Activated B cell treated with CpG ODN at 0.5 μM for 24 hours (primary cell): ENCODE measurements at regions of chr1 and their contacts with region 1.

Region 1: GRCh38 chr1:42766741-42767509 is at the starts of genes C1orf50 and P3H1:
- DNase-seq: peak; percentile 99
- ATAC-seq: peak; percentile 91
- H3K4me3 Mint-ChIP-seq: no peak within 1 kb of the TSS
- H3K27ac Mint-ChIP-seq: peak within 1 kb of the TSS; percentile 93
- H3K4me1 Mint-ChIP-seq: peaks cover 33% of the 10 kb centered on the region
- H3K27me3 Mint-ChIP-seq: no peaks in the 10 kb centered on the region
- CTCF ChIP-seq: no peak
- total RNA-seq, gene C1orf50: 10.6 and 13.1 TPM in 2 replicates
- total RNA-seq, gene P3H1: 27.1 and 30.4 TPM in 2 replicates

Region 2: GRCh38 chr1:42335050-42335808 is 431.7 kb before region 1 on chr1 and contains the start of gene FOXJ3:
- CTCF ChIA-PET with region 1: no interaction called
- POLR2A ChIA-PET with region 1: interaction called, 3 read pairs
- intact Hi-C with region 1: loop called (anchors 1 kb)
- DNase-seq: peak; percentile 91
- ATAC-seq: peak; percentile 92
- H3K4me3 Mint-ChIP-seq: peak within 1 kb of the TSS; percentile 93
- H3K27ac Mint-ChIP-seq: peak within 1 kb of the TSS; percentile 86
- H3K4me1 Mint-ChIP-seq: peaks cover 41% of the 10 kb centered on the region
- H3K27me3 Mint-ChIP-seq: no peaks in the 10 kb centered on the region
- CTCF ChIP-seq: no peak
- total RNA-seq, gene FOXJ3: 54.7 and 63.9 TPM in 2 replicates

Region 3: DNA sequence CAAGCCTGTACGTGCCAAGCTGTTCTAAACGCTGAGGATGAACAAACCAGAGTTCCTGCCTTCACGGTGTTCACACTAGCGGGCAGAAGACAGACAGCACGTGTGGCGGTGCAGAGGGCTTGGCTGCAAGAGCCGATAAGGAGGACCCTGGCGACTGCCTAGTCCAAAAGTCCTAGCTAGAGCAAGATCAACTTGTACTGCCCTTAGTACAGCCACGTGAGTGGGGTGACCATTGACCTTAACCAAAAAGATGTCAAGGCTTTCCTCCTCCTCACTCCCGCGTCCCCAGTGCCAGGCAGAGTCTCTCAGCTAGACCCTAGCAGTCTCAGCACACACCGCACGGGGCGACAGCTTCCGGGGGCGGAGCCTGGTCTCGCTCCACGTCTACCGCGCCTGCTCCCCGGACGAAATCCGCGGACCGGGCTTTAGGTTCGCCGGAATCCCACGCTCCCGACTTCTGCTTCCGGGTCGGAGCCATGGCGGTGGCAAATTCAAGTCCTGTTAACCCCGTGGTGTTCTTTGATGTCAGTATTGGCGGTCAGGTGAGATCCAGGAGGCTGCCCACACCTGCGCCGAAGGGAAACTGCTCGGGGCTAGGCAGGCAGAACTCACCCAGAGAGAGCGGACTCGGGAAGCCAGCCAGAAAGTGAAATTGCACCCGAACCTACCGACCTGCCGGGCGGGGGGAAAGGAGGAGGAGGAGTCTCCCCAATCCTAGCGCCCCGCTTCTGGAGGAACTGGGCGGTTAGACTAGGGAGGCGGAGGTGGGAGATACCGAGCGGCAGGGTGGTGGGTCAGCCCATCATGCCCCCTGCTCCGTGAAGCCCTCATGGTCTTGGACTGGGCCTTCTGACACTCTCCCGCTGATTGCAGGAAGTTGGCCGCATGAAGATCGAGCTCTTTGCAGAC is 108.7 kb before region 1 on chr1 and contains the start of gene PPIH:
- CTCF ChIA-PET with region 1: no interaction called
- POLR2A ChIA-PET with region 1: interaction called, 32 read pairs
- intact Hi-C with region 1: loop called (anchors 5 kb)
- DNase-seq: peak; percentile 87
- ATAC-seq: peak; percentile 99
- H3K4me3 Mint-ChIP-seq: peak within 1 kb of the TSS; percentile 95
- H3K27ac Mint-ChIP-seq: peak within 1 kb of the TSS; percentile 85
- H3K4me1 Mint-ChIP-seq: peaks cover 35% of the 10 kb centered on the region
- H3K27me3 Mint-ChIP-seq: no peaks in the 10 kb centered on the region
- CTCF ChIP-seq: no peak
- total RNA-seq, gene PPIH: 64.1 and 65.1 TPM in 2 replicates

Region 4: DNA sequence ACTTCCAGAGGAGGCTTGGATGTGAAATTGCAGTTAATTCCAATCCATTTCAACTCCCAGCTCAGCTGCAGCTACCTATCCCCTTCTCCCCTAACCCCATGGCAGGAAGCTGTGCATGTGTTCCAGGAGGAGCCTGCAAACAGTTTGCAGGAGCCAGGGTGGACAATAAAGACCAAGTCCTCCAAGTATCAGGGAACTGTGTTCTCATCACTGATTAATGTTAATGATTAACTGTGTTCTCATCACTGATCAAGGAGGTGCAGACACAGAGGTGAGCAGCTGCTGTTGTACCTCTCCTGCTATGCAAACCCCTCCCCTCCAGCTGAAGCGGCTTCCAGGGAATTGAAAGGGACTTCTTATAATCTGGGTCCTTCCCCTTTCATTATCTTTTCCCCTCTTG is 46.1 kb before region 1 on chr1:
- CTCF ChIA-PET with region 1: no interaction called
- POLR2A ChIA-PET with region 1: no interaction called
- intact Hi-C with region 1: no loop called
- DNase-seq: no peak
- ATAC-seq: no peak
- H3K4me3 Mint-ChIP-seq: no peak overlapping the region
- H3K27ac Mint-ChIP-seq: no peak overlapping the region
- H3K4me1 Mint-ChIP-seq: no peaks in the 10 kb centered on the region
- H3K27me3 Mint-ChIP-seq: no peaks in the 10 kb centered on the region
- CTCF ChIP-seq: no peak

Region 5: DNA sequence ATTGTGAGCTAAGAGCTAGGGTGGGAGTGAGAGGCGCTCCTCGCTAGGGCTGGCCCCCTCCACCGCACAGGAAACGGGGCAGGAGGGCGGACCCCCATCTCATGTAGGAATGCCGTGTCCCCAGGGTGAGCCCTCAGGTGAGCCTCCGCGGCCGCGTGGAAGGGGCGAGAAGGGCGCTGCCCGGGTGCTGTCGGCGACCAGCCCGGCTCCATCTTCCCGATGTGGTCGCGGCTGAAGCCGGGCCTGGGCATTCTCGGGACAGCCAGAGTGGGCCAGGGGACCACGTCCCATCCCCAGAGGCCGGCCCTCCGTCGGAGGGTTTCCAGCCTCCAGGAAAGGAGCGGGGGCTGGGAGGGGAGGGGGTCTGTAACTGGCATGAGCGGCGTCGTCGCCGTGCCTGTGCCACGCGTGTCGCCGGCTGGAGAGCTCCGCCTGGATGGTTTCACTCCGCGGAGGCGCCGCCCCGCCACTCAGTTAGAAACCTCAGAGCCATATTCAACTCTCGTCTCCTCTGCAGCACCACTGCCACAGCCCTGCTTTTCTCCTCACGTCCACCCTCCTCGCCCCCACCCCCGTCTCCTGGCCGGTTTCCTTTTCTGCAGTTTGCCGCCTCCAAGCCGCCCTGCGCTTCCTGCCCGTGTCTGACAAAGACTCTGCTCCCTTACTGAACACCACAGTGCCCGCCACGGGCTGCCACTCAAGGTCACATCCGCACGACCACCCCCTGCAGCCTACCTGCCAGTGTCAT is 18.2 kb after region 1 on chr1 and contains the start of gene TMEM269:
- CTCF ChIA-PET with region 1: no interaction called
- POLR2A ChIA-PET with region 1: interaction called, 10 read pairs
- intact Hi-C with region 1: no loop called
- DNase-seq: no peak
- ATAC-seq: peak; percentile 45
- H3K4me3 Mint-ChIP-seq: peak within 1 kb of the TSS; percentile 78
- H3K27ac Mint-ChIP-seq: peak within 1 kb of the TSS; percentile 9
- H3K4me1 Mint-ChIP-seq: peaks cover 11% of the 10 kb centered on the region
- H3K27me3 Mint-ChIP-seq: peaks cover 5% of the 10 kb centered on the region
- CTCF ChIP-seq: no peak
- total RNA-seq, gene TMEM269: 0.20 and 0.31 TPM in 2 replicates

Region 6: DNA sequence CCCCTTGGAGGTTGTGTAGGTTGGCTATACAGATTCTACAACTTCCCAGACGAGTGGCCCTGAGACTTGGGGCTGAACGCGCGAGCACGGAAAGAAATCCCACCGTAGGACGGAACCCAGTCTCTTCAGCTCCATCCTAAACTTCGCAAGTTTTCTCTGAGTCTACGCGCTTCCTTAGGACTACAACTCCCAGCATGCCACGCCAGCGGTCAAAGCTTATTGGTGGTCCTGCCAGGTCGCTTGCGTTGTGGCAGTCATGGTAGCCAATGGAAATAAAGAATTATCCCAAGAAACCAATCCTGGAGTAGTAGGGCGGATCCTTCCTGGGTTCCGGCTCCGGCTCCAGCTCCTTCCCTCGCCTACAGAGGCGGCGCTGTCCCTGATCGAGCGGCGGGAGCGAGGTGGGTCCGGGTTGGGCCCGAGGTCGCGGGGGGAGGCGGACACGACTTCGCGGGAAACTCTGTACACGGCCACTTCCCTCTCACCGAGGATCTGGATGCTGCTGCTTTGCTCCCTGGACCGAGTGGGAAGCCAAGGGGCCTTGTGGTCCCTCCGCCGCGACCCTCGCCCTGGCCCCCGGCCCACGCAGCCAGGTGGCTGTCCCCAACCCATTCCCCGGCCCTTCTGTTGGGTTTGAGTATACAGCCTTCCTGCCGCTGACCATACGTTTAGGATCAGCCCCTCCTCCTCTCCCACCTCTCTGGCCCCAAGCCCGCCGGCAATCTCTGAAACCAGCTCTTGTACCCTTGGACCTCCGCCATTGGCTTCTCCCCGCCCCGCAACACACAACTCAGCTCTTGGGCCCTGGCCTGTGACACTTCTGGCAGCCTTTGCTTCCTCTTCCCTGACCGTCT is 79.6 kb after region 1 on chr1 and contains the start of gene ZNF691:
- CTCF ChIA-PET with region 1: interaction called, 3 read pairs
- POLR2A ChIA-PET with region 1: interaction called, 24 read pairs
- intact Hi-C with region 1: loop called (anchors 1 kb)
- DNase-seq: peak; percentile 63
- ATAC-seq: peak; percentile 97
- H3K4me3 Mint-ChIP-seq: peak within 1 kb of the TSS; percentile 94
- H3K27ac Mint-ChIP-seq: peak within 1 kb of the TSS; percentile 83
- H3K4me1 Mint-ChIP-seq: peaks cover 43% of the 10 kb centered on the region
- H3K27me3 Mint-ChIP-seq: no peaks in the 10 kb centered on the region
- CTCF ChIP-seq: no peak
- total RNA-seq, gene ZNF691: 13.1 and 16.1 TPM in 2 replicates

Region 7: DNA sequence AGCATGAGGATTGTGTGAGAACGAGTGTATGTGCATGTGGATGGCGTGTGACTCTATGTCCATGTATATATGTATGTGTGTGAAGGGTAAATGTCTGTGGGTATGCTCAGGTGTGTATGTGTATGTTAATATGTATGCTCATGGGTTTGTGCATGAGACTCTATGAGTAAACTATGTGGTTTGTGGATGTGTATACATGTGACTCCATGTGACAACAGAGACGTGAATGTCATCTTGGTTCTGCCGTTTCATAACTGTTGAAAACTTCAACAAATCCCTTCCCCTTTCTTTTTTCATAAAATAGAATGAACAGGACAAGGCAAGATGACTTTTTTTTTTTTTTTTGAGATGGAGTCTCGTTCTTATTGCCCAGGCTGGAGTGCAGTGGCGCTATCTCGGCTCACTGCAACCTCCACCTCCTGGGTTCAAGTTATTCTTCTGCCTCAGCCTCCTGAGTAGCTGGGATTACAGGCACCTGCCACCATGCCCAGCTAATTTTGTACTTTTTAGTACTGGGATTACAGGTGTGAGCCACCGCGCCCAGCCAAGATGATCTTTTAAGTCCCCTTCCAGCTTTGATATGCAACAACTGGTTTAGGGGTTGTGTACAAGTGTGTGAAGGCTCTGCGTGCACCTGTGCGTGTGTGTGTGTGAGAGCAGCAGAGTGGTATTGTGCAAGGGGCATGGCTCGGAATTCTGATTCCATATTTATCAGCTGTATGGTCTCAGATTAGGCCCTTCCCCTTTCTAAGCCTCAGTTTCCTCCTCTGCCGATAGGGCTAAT is 298.9 kb after region 1 on chr1:
- CTCF ChIA-PET with region 1: no interaction called
- POLR2A ChIA-PET with region 1: no interaction called
- intact Hi-C with region 1: no loop called
- DNase-seq: no peak
- ATAC-seq: no peak
- H3K4me3 Mint-ChIP-seq: no peak overlapping the region
- H3K27ac Mint-ChIP-seq: no peak overlapping the region
- H3K4me1 Mint-ChIP-seq: peaks cover 16% of the 10 kb centered on the region
- H3K27me3 Mint-ChIP-seq: no peaks in the 10 kb centered on the region
- CTCF ChIP-seq: no peak

Region 8: GRCh38 chr1:43171876-43172526 is 405.1 kb after region 1 on chr1 and contains the starts of genes CFAP57 and EBNA1BP2:
- CTCF ChIA-PET with region 1: no interaction called
- POLR2A ChIA-PET with region 1: interaction called, 10 read pairs
- intact Hi-C with region 1: loop called (anchors 1 kb)
- DNase-seq: peak; percentile 84
- ATAC-seq: peak; percentile 82
- H3K4me3 Mint-ChIP-seq: peak within 1 kb of the TSS; percentile 99
- H3K27ac Mint-ChIP-seq: peak within 1 kb of the TSS; percentile 95
- H3K4me1 Mint-ChIP-seq: peaks cover 32% of the 10 kb centered on the region
- H3K27me3 Mint-ChIP-seq: peaks cover 20% of the 10 kb centered on the region
- CTCF ChIP-seq: no peak
- total RNA-seq, gene CFAP57: 0.93 TPM in 1 of 2 replicates, not detected in the other
- total RNA-seq, gene EBNA1BP2: 59.9 and 61.8 TPM in 2 replicates